Right lobe of liver (tissue), 6 donors: ENCODE measurements at regions of chr11 and their contacts with region 1.

Region 1: DNA sequence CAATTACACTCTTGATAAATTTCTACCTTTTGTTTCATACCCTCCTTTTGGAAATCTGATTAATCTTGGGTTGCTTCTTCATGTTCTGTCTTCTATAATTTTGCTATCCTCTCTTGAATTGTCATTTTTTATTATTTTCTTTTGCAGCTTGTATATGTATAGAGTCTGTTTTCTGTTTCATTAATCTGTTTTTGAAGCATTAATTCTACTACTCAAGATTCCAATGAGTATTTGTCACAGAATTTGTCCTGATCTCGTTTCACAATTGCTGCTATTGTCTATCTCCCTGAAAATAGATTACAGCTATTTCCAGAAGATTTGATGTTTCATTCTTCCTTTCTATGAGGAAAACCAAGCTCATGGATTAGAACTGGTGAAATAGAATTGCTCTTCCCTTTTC is 406.1 kb downstream of the DYNC2H1 start:
- DNase-seq: no peak
- ATAC-seq: no peak
- H3K4me3 ChIP-seq: no peak overlapping the region
- H3K27ac ChIP-seq: no peak overlapping the region
- H3K4me1 ChIP-seq: no peaks in the 10 kb centered on the region
- H3K27me3 ChIP-seq: no peaks in the 10 kb centered on the region
- CTCF ChIP-seq: no peak
- POLR2A ChIP-seq: no peak

Region 2: DNA sequence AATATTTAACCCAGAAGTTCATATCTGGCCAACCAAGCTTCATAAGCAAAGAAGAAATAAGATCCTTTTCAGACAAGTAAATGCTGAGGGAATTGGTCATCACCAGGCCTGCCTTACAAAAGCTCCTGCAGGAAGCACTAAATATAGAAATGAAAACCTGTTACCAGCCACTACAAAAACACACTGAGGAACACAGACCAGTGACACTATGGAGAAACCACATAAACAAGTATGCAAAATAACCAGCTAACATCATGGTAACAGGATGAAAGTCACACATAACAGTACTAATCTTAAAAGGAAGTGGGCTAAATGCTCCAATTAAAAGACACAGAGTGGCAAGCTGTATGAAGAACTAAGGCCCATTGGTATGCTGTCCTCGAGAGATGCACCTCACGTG is 94.7 kb before region 1 on chr11:
- intact Hi-C with region 1: no loop called
- DNase-seq: no peak
- ATAC-seq: no peak
- H3K4me3 ChIP-seq: no peak overlapping the region
- H3K27ac ChIP-seq: no peak overlapping the region
- H3K4me1 ChIP-seq: no peaks in the 10 kb centered on the region
- H3K27me3 ChIP-seq: no peaks in the 10 kb centered on the region
- CTCF ChIP-seq: no peak
- POLR2A ChIP-seq: no peak

Region 3: DNA sequence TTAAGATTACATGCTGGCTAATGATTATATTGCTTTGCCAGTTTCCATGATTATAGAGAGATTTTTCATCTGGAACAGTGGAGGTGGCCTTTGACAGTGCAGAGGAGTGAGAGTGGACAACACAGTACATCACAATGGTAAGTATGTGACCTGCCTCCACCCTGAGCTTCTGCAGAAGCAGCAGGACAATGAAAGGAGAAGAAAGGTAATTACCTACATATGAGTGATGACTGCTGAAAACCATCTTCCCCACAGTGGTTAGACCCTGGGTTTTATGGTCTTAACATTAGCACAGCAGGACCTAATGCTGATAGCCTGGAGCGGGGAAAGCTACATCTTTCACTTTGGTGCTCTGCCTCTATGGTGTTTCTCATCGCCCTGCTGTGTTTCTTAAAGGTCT is 66.5 kb after region 1 on chr11:
- intact Hi-C with region 1: loop called in 1 of 2 experiments (anchors 10 kb)
- DNase-seq: no peak
- ATAC-seq: no peak
- H3K4me3 ChIP-seq: no peak overlapping the region
- H3K27ac ChIP-seq: no peak overlapping the region
- H3K4me1 ChIP-seq: no peaks in the 10 kb centered on the region
- H3K27me3 ChIP-seq: no peaks in the 10 kb centered on the region
- CTCF ChIP-seq: no peak
- POLR2A ChIP-seq: no peak